AG04449 (cell line): ENCODE measurements at regions of chr12 and their contacts with region 1.

Region 1: DNA sequence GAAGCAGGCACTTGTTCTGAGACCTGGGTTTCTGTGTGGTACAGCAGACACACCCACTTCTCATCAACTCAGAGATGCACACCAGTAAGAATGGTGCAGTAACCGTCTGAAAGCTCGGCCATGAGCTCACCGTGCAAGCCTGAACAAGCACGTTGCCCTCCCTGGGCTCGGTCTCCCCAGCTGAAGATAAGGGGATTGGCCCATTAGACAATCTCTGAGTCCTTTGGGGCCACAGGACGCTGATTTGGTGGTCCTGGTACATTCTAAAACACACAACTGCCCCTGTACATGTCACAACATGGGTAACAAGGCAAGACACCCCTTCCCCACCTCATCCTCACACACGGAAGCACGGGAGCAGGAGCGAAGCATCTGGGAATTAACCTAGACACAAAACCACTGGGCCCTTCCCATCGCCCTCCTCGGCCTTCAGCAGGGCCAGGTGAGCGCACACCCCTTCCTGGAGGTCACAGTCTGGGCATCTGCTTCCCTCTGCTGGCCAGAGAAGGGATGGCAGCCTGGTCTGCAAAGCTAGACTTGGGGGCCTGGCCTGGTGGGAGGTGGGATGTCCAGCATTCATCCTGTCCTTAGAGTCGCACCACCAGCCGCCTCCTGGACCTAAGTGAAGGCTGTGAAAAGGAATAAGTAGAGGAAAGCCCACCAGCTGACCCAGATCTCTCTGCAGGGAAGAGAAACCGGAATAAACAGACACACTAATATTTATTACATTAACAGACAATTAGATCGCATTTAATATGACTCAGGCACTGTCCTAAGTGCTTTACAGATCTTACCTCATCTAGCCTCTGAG is 18.9 kb upstream of the SMUG1 start:
- DNase-seq: no peak
- H3K4me3 ChIP-seq: no peak overlapping the region
- CTCF ChIP-seq: peak; percentile 99

Region 2: GRCh38 chr12:53770281-53770680 is 437.4 kb before region 1 on chr12:
- CTCF ChIA-PET with region 1: interaction called, 19 read pairs
- POLR2A ChIA-PET with region 1: no interaction called
- DNase-seq: peak; percentile 90
- H3K4me3 ChIP-seq: no peak overlapping the region
- CTCF ChIP-seq: no peak

Region 3: DNA sequence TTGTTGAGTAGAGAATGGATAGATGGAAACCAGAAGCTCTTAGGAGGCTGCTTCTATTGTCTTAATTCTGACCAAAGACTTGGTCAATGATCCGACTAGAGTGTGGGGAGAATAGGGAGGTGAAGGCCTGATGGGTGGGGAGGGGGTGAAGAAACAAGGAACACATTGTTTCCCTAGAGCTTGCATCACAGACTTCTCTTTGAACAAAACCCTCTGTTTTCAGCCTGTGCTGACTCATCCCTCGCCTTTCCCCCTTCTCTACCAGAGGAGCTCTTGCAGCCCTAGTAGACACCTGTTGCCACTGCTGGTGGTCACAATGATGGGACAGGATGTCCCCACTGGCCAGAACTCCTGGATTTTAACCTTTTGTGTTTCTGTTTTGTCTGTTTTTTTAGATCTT is 409.1 kb before region 1 on chr12:
- CTCF ChIA-PET with region 1: no interaction called
- POLR2A ChIA-PET with region 1: no interaction called
- DNase-seq: no peak
- H3K4me3 ChIP-seq: no peak overlapping the region
- CTCF ChIP-seq: no peak

Region 4: GRCh38 chr12:54005853-54006686 is 201.6 kb before region 1 on chr12:
- CTCF ChIA-PET with region 1: interaction called, 756 read pairs
- POLR2A ChIA-PET with region 1: no interaction called
- DNase-seq: no peak
- H3K4me3 ChIP-seq: peak overlapping the region; percentile 96
- CTCF ChIP-seq: peak; percentile 90

Region 5: GRCh38 chr12:54140588-54141388 is 66.9 kb before region 1 on chr12:
- CTCF ChIA-PET with region 1: no interaction called
- POLR2A ChIA-PET with region 1: no interaction called
- DNase-seq: peak; percentile 40
- H3K4me3 ChIP-seq: no peak overlapping the region
- CTCF ChIP-seq: no peak

Region 6: GRCh38 chr12:54153586-54153985 is 54.1 kb before region 1 on chr12:
- CTCF ChIA-PET with region 1: no interaction called
- POLR2A ChIA-PET with region 1: no interaction called
- DNase-seq: no peak
- H3K4me3 ChIP-seq: no peak overlapping the region
- CTCF ChIP-seq: no peak

Region 7: GRCh38 chr12:54191550-54192022 is 16.1 kb before region 1 on chr12:
- CTCF ChIA-PET with region 1: interaction called, 306 read pairs
- POLR2A ChIA-PET with region 1: interaction called, 3 read pairs
- DNase-seq: no peak
- H3K4me3 ChIP-seq: no peak overlapping the region
- CTCF ChIP-seq: peak; percentile 81

Region 8: GRCh38 chr12:54359033-54359761 is 151.5 kb after region 1 on chr12:
- CTCF ChIA-PET with region 1: interaction called, 98 read pairs
- POLR2A ChIA-PET with region 1: no interaction called
- DNase-seq: peak; percentile 97
- H3K4me3 ChIP-seq: peak overlapping the region; percentile 59
- CTCF ChIP-seq: no peak

Region 9: DNA sequence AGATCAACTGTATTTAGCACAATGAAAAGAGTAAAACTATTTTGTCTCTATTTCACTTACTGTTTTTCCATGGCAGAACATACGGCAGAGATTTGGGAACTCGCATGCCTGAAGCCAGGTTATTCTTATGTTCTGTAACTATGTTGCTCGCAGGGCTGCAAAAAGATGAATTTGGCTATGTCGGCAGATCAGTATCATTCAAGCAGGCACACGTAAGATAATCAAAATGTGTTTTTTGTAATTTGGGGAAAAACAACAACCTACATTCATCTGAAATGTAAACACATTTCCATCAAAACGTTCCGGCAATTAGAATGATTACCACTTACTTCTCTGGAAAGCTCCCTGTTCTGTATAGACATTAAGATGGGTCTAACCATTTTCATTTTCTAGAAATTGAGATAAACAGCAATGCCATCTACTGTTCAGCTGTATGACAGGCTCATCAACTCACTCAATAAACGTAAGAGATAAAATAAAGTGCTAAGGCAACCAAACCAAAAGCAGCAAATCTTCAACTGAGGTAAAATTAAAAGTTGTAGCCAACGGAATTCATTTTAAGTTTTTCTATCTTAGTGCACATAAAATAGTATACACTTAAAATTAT is 252.7 kb after region 1 on chr12:
- CTCF ChIA-PET with region 1: no interaction called
- POLR2A ChIA-PET with region 1: no interaction called
- DNase-seq: no peak
- H3K4me3 ChIP-seq: no peak overlapping the region
- CTCF ChIP-seq: no peak